K562 (cell line): ENCODE measurements at regions of chr1 and their contacts with region 1.

Region 1: GRCh38 chr1:168092566-168093355 is 44.0 kb downstream of the GPR161 start:
- DNase-seq: peak in 3 of 4 experiments; percentile 34 to 41 (median 37)
- ATAC-seq: peak; percentile 56
- H3K4me3 ChIP-seq: no peak overlapping the region
- H3K27ac ChIP-seq: no peak overlapping the region
- H3K4me1 ChIP-seq: peaks cover 0 to 8% of the 10 kb centered on the region in 2 experiments; a peak in 2 of 5 replicates
- H3K27me3 ChIP-seq: peaks cover 9 to 39% of the 10 kb centered on the region in 2 experiments; a peak in 4 of 5 replicates
- CTCF ChIP-seq: peak; percentile 43 to 62 (median 59); a peak in 5 of 6 replicates
- EP300 ChIP-seq: no peak
- POLR2A ChIP-seq: no peak
- RAD21 ChIP-seq: peak; percentile 47 to 76; a peak in 3 of 4 replicates

Region 2: DNA sequence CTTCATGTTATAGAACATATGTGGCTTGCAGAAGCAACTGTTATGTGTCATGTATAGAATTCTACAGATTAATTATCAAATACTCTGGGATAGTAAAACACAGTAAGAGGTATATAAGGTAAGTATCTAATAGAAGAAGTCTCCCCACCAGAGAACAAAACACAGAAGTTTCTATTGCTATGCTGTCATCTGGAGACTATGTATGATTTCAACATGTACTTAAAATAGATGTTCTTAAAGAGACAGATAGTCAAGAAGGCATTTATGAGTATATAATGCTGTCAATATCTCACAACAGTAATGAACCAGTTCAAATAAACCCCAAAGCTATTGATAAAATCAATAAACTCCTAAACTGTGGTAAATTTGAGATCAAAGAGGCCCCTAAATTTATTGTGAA is 170.7 kb before region 1 on chr1:
- CTCF ChIA-PET with region 1: no interaction called
- POLR2A ChIA-PET with region 1: no interaction called
- in situ Hi-C with region 1: no loop called
- intact Hi-C with region 1: no loop called
- DNase-seq: no peak
- ATAC-seq: no peak
- H3K4me3 ChIP-seq: no peak overlapping the region
- H3K27ac ChIP-seq: peak overlapping the region; percentile 76; the same call in 2 of the 3 replicates
- H3K4me1 ChIP-seq: peaks cover 14 to 50% of the 10 kb centered on the region in 2 experiments
- H3K27me3 ChIP-seq: no peaks in the 10 kb centered on the region
- CTCF ChIP-seq: no peak
- EP300 ChIP-seq: no peak
- POLR2A ChIP-seq: no peak
- RAD21 ChIP-seq: no peak

Region 3: GRCh38 chr1:168004531-168004930 is 88.2 kb before region 1 on chr1:
- CTCF ChIA-PET with region 1: no interaction called
- POLR2A ChIA-PET with region 1: no interaction called
- in situ Hi-C with region 1: no loop called
- intact Hi-C with region 1: no loop called
- DNase-seq: no peak
- ATAC-seq: peak; percentile 45; the same call in 2 of the 3 replicates
- H3K4me3 ChIP-seq: no peak overlapping the region
- H3K27ac ChIP-seq: no peak overlapping the region
- H3K4me1 ChIP-seq: no peaks in the 10 kb centered on the region; a peak in 1 of 5 replicates
- H3K27me3 ChIP-seq: no peaks in the 10 kb centered on the region
- CTCF ChIP-seq: no peak
- EP300 ChIP-seq: no peak
- POLR2A ChIP-seq: no peak
- RAD21 ChIP-seq: no peak

Region 4: DNA sequence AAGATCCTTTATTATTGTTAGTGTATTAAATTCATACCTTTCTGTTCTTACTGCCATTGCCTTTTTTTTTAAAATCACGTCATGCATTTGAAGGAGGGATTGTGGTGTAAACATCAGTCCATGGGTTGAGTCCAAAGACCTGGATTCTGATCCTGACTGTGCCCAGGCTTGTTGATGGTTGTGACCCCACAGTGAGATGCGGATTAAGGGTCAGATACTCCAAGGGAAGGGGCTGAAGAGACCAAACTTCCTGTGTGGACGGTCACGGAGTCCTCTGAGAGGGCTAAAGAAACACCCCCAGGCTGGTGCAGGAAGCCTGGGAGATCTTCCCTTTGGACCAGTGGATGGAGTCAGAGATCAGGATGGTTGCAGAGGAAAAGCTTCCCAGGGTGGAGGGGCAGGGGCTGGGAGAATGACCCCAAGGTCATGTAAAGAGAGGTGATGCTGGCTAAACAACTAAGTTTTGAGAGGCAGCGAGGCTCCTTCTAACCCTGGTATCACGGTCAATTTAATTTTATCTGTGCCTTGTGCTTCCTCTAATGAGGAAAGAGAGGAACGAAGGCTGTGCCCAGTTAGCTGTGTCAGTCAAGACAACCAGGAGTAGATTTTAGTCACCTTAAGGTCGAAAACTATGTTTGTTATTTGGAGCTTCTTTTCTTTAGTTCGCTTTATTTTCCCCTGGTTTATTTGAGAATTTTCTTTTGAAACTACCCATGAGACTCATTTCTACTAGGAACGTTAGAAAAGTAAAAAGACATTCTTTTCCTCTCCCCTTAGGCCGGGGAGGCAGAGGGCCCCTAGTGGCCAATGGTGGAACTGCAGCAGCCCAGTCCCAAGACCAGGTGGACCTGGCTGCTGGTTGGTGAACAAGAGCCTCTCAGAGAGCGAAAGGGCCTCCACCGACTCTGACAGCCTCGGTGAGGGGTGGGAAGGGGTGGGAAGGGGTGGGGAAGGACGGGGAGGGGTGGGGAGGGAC is 52.7 kb after region 1 on chr1:
- CTCF ChIA-PET with region 1: interaction called, 3 read pairs
- POLR2A ChIA-PET with region 1: no interaction called
- in situ Hi-C with region 1: no loop called
- intact Hi-C with region 1: loop called (anchors 5 kb)
- DNase-seq: peak; percentile 94 to 95 (median 94)
- ATAC-seq: peak; percentile 99
- H3K4me3 ChIP-seq: no peak overlapping the region
- H3K27ac ChIP-seq: no peak overlapping the region
- H3K4me1 ChIP-seq: peaks cover 0 to 10% of the 10 kb centered on the region in 2 experiments; a peak in 3 of 5 replicates
- H3K27me3 ChIP-seq: no peaks in the 10 kb centered on the region
- CTCF ChIP-seq: peak; percentile 92 to 98 (median 96)
- EP300 ChIP-seq: no peak
- POLR2A ChIP-seq: no peak
- RAD21 ChIP-seq: peak; percentile 32 to 61

Region 5: DNA sequence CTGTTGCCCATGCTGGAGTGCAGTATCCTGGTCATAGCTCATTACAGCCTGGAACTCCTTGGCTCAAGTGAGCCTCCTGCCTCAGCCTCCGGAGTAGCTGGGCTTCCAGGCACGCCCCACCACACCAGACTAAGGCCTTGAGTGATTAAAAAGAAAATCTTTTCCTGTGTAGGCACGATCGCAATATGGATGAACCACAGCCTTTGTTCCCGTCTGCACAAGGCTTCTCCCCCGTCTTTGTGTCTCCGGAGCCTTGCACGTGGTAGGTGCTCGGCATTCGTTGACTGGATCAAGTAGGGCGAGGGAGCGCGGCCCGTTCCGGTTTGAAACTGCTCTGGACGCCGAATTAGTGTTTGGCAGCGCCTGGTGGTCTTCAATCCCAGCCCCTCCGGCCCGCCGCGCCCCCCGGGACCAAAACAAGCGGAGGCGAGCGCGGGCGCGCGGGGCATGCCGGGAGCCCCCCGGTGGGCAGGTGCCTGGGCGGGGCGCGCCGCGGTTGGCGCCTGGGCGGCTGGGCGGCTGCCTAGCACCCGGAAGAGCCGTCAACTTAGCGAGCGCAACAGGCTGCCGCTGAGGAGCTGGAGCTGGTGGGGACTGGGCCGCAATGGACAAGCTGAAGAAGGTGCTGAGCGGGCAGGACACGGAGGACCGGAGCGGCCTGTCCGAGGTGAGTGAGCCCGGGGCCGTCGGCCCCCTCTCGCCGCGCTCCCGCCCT is 132.9 kb after region 1 on chr1 and contains the start of gene SFT2D2:
- CTCF ChIA-PET with region 1: no interaction called
- POLR2A ChIA-PET with region 1: no interaction called
- in situ Hi-C with region 1: no loop called
- intact Hi-C with region 1: loop called (anchors 10 kb)
- DNase-seq: peak; percentile 91 to 96 (median 95)
- ATAC-seq: peak; percentile 95
- H3K4me3 ChIP-seq: peak within 1 kb of the TSS; percentile 80
- H3K27ac ChIP-seq: peak within 1 kb of the TSS; percentile 91
- H3K4me1 ChIP-seq: peaks cover 20 to 30% of the 10 kb centered on the region in 2 experiments
- H3K27me3 ChIP-seq: no peaks in the 10 kb centered on the region
- CTCF ChIP-seq: no peak
- EP300 ChIP-seq: no peak
- POLR2A ChIP-seq: peak; percentile 96
- RAD21 ChIP-seq: no peak
- polyA plus RNA-seq, gene SFT2D2: 3.4 to 6.1 TPM

Region 6: DNA sequence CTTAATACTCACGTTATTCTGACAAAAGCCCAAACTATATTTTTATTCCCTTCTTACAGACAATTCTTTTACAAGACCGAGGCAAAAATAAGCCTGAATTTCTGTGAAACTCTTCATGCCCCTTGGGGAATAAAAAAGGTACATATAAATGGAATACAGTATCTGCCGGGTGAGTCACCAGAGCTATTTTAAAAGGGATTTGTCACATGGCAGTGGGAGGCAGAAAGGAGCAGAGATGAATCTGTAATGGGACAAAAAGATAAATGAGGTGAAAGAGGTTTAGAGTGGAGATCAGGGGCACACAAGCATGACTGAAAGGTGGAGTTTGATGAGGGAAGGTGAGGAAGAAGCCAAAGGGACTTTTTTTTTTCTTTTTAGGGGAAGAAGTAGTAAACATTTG is 492.4 kb after region 1 on chr1:
- CTCF ChIA-PET with region 1: no interaction called
- POLR2A ChIA-PET with region 1: no interaction called
- in situ Hi-C with region 1: loop called (anchors 10 kb)
- intact Hi-C with region 1: no loop called
- DNase-seq: no peak
- ATAC-seq: no peak
- H3K4me3 ChIP-seq: no peak overlapping the region
- H3K27ac ChIP-seq: no peak overlapping the region
- H3K4me1 ChIP-seq: no peaks in the 10 kb centered on the region
- H3K27me3 ChIP-seq: peaks cover 0 to 7% of the 10 kb centered on the region in 2 experiments; a peak in 1 of 5 replicates
- CTCF ChIP-seq: no peak
- EP300 ChIP-seq: no peak
- POLR2A ChIP-seq: no peak
- RAD21 ChIP-seq: no peak